Activated B cell treated with CpG ODN at 0.5 μM for 24 hours (primary cell): ENCODE measurements at regions of chr2 and their contacts with region 1.

Region 1: GRCh38 chr2:231394211-231395141 is 1.0 kb upstream of the B3GNT7 start:
- DNase-seq: peak; percentile 55
- ATAC-seq: peak; percentile 56
- H3K4me3 Mint-ChIP-seq: peak overlapping the region; percentile 97
- H3K27ac Mint-ChIP-seq: peak overlapping the region; percentile 100
- H3K4me1 Mint-ChIP-seq: peaks cover 67% of the 10 kb centered on the region
- H3K27me3 Mint-ChIP-seq: no peaks in the 10 kb centered on the region
- CTCF ChIP-seq: no peak

Region 2: GRCh38 chr2:230873476-230874451 is 520.7 kb before region 1 on chr2:
- CTCF ChIA-PET with region 1: no interaction called
- POLR2A ChIA-PET with region 1: interaction called, 6 read pairs
- intact Hi-C with region 1: loop called (anchors 5 kb)
- DNase-seq: peak; percentile 71
- ATAC-seq: peak; percentile 83
- H3K4me3 Mint-ChIP-seq: peak overlapping the region; percentile 76
- H3K27ac Mint-ChIP-seq: peak overlapping the region; percentile 93
- H3K4me1 Mint-ChIP-seq: peaks cover 89% of the 10 kb centered on the region
- H3K27me3 Mint-ChIP-seq: no peaks in the 10 kb centered on the region
- CTCF ChIP-seq: no peak

Region 3: GRCh38 chr2:231227309-231228162 is 166.9 kb before region 1 on chr2:
- CTCF ChIA-PET with region 1: interaction called, 6 read pairs
- POLR2A ChIA-PET with region 1: interaction called, 9 read pairs
- intact Hi-C with region 1: loop called (anchors 1 kb)
- DNase-seq: no peak
- ATAC-seq: peak; percentile 89
- H3K4me3 Mint-ChIP-seq: no peak overlapping the region
- H3K27ac Mint-ChIP-seq: no peak overlapping the region
- H3K4me1 Mint-ChIP-seq: peaks cover 24% of the 10 kb centered on the region
- H3K27me3 Mint-ChIP-seq: no peaks in the 10 kb centered on the region
- CTCF ChIP-seq: peak; percentile 23

Region 4: DNA sequence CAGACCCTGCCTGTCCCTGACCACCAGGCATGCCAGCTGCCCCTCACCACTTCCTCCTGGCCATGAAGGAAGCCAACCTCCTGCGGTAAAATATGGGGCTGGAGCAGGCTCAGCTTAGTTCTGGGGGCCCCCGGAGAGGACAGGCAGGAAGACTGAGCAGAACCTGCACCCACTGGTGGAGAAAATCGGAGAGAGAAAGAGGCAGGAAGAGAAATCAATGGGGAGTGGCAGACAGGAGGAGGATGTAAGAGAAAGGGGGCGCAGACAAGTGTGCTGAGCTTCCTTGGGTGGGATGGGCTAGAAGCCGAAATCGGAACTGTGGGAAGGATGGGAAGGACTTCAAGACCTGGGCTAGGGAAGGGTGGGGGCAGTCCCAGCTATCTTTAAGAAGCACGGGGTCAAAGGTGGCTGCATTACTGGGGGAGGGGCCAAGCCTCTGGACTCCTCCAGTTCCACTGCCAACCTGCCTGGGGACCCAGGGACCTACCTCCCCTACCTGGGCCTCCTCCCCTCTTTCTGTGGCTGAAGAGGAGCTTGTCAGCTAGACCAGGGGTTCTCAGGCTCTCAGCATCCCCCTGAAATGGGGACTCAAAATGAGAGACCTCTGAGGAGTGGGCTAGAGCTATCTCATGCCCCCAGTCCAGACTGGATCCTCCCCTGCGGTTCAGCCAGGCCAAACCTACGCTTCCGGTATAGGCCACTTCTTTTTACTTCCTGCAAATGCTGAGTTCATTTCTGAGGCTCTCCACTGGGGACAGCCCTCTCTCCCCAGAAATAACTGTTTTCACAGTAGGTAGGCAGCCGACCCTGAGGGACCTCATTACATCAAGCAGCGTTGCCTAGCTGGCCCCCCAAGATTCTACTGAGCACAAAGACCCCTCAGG is 32.6 kb before region 1 on chr2:
- CTCF ChIA-PET with region 1: interaction called, 3 read pairs
- POLR2A ChIA-PET with region 1: interaction called, 27 read pairs
- intact Hi-C with region 1: loop called (anchors 1 kb)
- DNase-seq: peak; percentile 20
- ATAC-seq: peak; percentile 90
- H3K4me3 Mint-ChIP-seq: peak overlapping the region; percentile 32
- H3K27ac Mint-ChIP-seq: peak overlapping the region; percentile 59
- H3K4me1 Mint-ChIP-seq: peaks cover 28% of the 10 kb centered on the region
- H3K27me3 Mint-ChIP-seq: no peaks in the 10 kb centered on the region
- CTCF ChIP-seq: no peak

Region 5: DNA sequence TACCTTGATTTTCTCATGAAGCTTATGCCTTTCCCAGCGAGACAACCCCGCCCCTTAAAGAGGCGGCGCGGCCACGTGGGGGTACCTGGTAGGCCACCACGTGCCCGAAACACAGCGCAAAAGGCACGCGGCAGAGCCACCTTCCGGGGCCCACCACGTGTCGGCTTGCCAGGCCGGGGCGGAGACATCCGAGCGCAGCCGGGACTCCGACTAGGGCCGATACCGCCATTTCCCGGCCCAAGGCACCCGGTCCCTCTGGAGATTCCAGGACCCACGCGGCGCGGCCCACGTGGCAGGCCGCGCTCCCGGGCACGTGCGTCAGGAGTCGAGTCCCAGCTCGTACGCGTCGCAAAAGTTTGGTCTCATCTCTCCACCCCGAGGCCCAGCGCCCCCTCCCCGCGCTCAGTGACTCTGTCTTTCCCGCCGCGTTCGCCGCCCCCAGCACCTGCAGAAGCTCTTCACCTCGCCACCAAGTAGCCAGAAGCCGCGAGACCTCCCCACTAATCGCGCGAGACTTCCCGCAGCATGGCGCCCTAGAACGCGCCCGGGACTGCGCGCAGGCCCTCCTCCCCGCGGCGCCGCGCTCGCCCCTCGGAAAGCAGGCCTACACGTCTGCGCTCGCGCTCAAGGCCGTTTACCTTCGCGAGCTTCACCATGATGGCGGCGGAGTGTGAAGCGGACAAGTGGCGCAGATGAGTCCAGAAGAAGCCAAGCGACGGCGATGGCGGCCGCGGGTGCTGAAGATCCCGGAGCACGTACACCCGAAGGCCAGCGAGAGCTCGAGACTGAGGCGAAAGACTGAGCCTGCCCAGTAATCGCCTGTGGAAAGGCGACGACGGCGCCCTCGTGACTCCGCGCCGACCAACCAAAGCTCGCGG is 69.5 kb after region 1 on chr2 and contains the start of gene NCL:
- CTCF ChIA-PET with region 1: no interaction called
- POLR2A ChIA-PET with region 1: interaction called, 50 read pairs
- intact Hi-C with region 1: loop called (anchors 1 kb)
- DNase-seq: peak; percentile 71
- ATAC-seq: peak; percentile 54
- H3K4me3 Mint-ChIP-seq: peak within 1 kb of the TSS; percentile 98
- H3K27ac Mint-ChIP-seq: peak within 1 kb of the TSS; percentile 100
- H3K4me1 Mint-ChIP-seq: peaks cover 39% of the 10 kb centered on the region
- H3K27me3 Mint-ChIP-seq: no peaks in the 10 kb centered on the region
- CTCF ChIP-seq: no peak
- total RNA-seq, gene NCL: 693 and 761 TPM in 2 replicates

Region 6: DNA sequence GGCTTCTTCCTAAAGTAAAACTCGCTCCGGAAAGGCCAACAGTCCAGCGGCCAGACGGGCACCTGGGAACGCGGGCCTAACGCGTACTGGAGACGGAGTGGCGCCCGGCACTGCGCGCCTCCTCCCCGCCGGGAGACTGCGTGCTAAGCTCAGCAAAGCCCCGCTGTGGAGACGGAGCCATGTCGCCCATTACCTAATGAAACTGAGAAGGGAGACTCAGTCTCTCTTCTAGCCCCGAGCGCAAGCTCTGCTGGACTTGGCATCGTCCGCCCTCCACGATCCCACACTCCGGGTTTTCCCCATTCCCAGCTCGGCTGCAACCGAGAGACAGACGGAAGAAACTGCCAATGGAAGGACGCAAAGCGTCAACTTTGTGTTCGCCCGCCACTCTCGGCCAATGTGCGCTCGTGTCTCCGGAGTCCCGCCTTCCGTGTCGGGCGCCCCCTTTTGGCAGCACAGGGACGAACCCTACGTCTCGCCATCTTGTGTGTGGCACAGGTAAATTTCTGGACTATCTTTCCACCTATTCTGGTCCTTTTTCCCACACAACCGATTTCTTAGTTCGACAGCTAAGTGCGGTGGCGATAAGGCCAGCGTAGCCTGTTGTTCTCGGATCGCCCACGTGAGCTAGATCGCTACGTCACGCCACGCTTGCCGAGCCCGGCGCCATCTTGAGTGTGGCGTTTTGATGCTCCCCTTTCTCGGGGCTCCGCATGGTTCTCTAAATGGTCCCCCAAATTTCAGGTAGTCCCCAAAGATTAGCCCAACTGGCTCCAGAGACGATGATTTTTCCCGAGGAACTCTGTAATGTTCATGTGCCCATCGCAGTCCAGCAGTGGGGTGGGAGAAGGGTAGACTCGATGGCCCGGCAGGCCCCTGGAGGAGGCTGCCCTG is 312.5 kb after region 1 on chr2:
- CTCF ChIA-PET with region 1: no interaction called
- POLR2A ChIA-PET with region 1: interaction called, 5 read pairs
- intact Hi-C with region 1: loop called (anchors 2 kb)
- DNase-seq: peak; percentile 94
- ATAC-seq: peak; percentile 47
- H3K4me3 Mint-ChIP-seq: peak overlapping the region; percentile 97
- H3K27ac Mint-ChIP-seq: peak overlapping the region; percentile 100
- H3K4me1 Mint-ChIP-seq: peaks cover 36% of the 10 kb centered on the region
- H3K27me3 Mint-ChIP-seq: no peaks in the 10 kb centered on the region
- CTCF ChIP-seq: peak; percentile 84